Thyroid gland (tissue), 4 donors: ENCODE measurements at regions of chr9 and their contacts with region 1.

Region 1: GRCh38 chr9:21974548-21975409 is 19.4 kb downstream of the CDKN2A start:
- DNase-seq: peak; percentile 14 to 19
- H3K4me3 ChIP-seq: peak overlapping the region in 2 of 3 donors; percentile 9 to 39
- H3K27ac ChIP-seq: no peak overlapping the region
- H3K4me1 ChIP-seq: peaks cover 10 to 17% of the 10 kb centered on the region in 2 donors
- H3K27me3 ChIP-seq: peaks cover 71% of the 10 kb centered on the region
- CTCF ChIP-seq: no peak
- POLR2A ChIP-seq: no peak

Region 2: DNA sequence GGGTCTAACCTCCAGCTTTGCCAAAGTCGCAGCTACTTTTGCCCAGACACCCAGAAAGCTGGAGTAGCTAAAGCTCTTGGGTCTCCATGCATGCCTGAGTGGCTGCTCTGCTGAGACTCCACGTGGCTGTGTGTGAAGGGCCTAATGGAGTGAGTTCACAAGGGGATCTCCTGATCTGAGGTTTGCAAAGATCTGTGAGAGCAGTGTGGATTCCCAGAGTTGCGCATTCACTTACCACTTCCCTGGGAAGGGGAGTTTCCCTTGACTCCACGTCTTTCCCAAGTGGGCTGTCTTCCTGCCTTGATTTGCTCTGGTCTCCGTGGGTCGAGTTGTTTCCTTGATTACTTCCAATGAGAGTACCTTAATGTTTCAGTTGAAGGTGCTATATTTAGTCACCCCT is 51.9 kb after region 1 on chr9:
- intact Hi-C with region 1: loop called (anchors 10 kb)
- DNase-seq: peak in 1 of 2 donors; percentile 16
- H3K4me3 ChIP-seq: no peak overlapping the region
- H3K27ac ChIP-seq: no peak overlapping the region
- H3K4me1 ChIP-seq: no peaks in the 10 kb centered on the region
- H3K27me3 ChIP-seq: no peaks in the 10 kb centered on the region
- CTCF ChIP-seq: no peak
- POLR2A ChIP-seq: no peak

Region 3: GRCh38 chr9:22316645-22317044 is 341.9 kb after region 1 on chr9:
- intact Hi-C with region 1: no loop called
- DNase-seq: no peak
- H3K4me3 ChIP-seq: no peak overlapping the region
- H3K27ac ChIP-seq: no peak overlapping the region
- H3K4me1 ChIP-seq: no peaks in the 10 kb centered on the region
- H3K27me3 ChIP-seq: no peaks in the 10 kb centered on the region
- CTCF ChIP-seq: no peak
- POLR2A ChIP-seq: no peak